Head of caudate nucleus (tissue), 42 donors: ENCODE measurements at regions of chr6 and their contacts with region 1.

Region 1: GRCh38 chr6:97437087-97437486 is 154.1 kb upstream of the MMS22L start:
- DNase-seq: peak in 19 of 42 donors; percentile 5 to 78 (median 49)

Region 2: DNA sequence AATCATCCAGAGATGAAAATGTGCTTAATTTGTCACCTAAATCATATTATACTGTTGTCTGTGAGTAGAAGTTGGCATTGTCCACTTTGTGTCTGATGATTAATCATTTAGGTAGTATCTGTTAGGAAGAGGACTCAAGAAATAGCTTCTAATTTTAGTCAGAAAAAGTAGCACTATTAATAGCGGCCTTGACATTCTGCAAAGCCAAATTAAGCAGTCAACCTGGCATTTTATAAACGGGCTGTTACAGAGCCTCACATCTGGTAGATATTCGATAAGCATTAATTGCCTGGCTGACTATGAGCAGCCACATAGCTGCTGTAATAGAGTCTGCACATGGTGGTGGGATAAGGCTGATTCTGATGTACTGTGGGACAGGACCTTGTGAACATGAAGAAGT is 413.1 kb before region 1 on chr6:
- intact Hi-C with region 1: no loop called
- DNase-seq: no peak

Region 3: GRCh38 chr6:98039869-98040607 is 603.0 kb after region 1 on chr6:
- intact Hi-C with region 1: loop called (anchors 10 kb)
- DNase-seq: peak in 6 of 42 donors; percentile 16 to 39 (median 22)

Region 4: GRCh38 chr6:98839781-98840361 is 1402.8 kb after region 1 on chr6:
- intact Hi-C with region 1: loop called (anchors 5 kb)
- DNase-seq: peak in 35 of 42 donors; percentile 27 to 87 (median 67)